ENCODE measurements at regions of chr12 and their contacts with region 1.

Region 1: GRCh38 chr12:56041552-56042429 is at the start of gene RPS26:
- DNase-seq: peak; percentile 95 to 96
- H3K4me3 ChIP-seq: peak within 1 kb of the TSS; percentile 73
- H3K27ac ChIP-seq: peak within 1 kb of the TSS; percentile 68
- H3K4me1 ChIP-seq: peaks cover 24% of the 10 kb centered on the region
- H3K27me3 ChIP-seq: no peaks in the 10 kb centered on the region
- CTCF ChIP-seq: peak; percentile 51
- total RNA-seq, gene RPS26: 25.2 and 43.3 TPM in 2 replicates

Region 2: DNA sequence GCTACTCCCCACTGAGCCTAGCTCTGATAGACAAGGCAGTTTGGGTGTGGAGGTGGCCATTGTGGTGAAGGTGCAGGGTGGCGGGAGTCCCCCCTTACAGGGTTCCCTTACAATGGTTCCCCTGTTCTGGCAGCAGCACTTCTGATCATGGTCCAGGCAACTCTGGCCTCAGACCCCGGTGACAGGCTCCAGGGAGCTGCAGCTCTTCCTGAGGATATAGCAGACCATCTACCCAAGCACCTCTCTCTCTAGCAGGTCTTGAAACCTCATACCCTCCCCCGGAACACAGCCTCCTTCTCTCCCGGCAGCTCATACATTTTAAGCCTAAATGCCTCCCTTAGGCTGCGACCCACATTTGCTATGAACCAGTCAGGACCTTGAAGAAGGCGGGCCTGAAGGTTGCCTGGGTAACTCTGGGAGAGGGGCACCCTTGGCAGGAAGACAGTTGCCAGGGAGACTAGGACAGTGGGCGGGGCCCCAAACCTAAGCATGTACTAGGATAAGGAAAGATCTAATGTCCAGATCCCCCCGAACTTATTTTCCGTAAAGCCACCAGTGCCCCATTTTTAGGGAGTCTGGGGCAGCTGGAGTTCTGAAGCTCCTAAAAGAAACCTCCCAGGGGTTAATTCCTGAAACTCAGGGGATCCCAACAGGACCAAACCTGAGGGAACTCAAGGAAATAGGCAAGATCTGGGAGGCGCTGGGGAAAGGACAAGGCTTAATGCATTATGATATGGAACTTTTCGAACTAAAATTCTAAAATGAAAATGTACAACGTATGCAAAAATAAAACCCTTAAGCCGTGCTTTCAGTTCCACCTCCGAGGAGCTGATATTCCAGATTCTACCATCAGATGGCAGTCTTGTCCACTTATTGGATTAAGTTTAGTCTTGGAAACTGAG is 303.4 kb before region 1 on chr12:
- CTCF ChIA-PET with region 1: no interaction called
- POLR2A ChIA-PET with region 1: no interaction called
- intact Hi-C with region 1: loop called (anchors 1 kb)
- DNase-seq: peak; percentile 68 to 71
- H3K4me3 ChIP-seq: peak overlapping the region; percentile 74
- H3K27ac ChIP-seq: no peak overlapping the region
- H3K4me1 ChIP-seq: peaks cover 12% of the 10 kb centered on the region
- H3K27me3 ChIP-seq: no peaks in the 10 kb centered on the region
- CTCF ChIP-seq: peak; percentile 90

Region 3: DNA sequence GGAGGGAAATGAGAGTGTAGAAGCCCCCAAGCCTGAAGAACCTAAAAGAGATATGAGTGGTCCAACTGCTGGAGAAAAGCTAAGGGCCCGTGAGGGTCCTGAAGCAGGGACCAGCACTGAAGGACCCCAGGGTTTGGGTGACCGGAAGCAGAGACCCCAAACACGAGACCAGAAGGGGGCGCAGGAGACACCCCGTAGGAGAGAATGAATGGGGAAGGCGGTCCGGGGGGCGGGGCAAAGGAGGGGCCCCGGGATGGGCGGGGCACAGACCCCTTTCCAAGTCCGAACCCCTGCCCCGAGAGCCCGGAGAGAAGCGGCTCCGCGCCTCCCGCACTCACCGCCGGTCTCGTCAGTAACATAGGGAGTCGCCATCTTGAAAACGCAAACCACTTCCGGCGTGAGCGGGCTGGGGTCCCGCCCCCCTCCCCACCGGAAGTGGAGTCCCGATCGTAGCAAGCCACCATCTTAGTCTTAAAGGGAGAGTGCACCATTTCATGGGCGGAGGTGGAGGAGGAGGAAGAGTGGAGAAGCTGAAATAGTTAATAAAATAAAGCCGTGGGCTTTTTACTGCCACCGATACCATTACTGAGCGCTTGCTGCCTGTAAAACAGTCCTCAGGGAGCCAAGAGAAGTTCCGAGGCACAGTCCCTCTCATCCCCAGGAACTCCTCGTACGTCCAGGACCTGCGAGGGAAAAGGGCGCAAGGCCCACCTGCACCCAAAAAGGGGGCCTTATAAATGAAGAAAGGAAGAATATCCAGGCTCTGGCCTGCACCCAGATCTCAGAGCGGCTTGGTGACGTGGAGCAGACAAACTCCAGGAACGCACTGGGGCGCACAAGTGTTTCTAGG is 114.8 kb before region 1 on chr12:
- CTCF ChIA-PET with region 1: interaction called, 3 read pairs
- POLR2A ChIA-PET with region 1: no interaction called
- intact Hi-C with region 1: loop called (anchors 2 kb)
- DNase-seq: peak; percentile 82 to 85
- H3K4me3 ChIP-seq: peak overlapping the region; percentile 100
- H3K27ac ChIP-seq: peak overlapping the region; percentile 83
- H3K4me1 ChIP-seq: peaks cover 39% of the 10 kb centered on the region
- H3K27me3 ChIP-seq: no peaks in the 10 kb centered on the region
- CTCF ChIP-seq: peak; percentile 86

Region 4: GRCh38 chr12:55996715-55997534 is 44.9 kb before region 1 on chr12 and contains the start of gene SUOX:
- CTCF ChIA-PET with region 1: interaction called, 4 read pairs
- POLR2A ChIA-PET with region 1: no interaction called
- intact Hi-C with region 1: loop called (anchors 1 kb)
- DNase-seq: peak; percentile 94 to 95
- H3K4me3 ChIP-seq: peak within 1 kb of the TSS; percentile 70
- H3K27ac ChIP-seq: no peak within 1 kb of the TSS
- H3K4me1 ChIP-seq: peaks cover 9% of the 10 kb centered on the region
- H3K27me3 ChIP-seq: no peaks in the 10 kb centered on the region
- CTCF ChIP-seq: no peak; the same call in 1 of the 2 replicates
- total RNA-seq, gene SUOX: 20.4 and 22.7 TPM in 2 replicates

Region 5: GRCh38 chr12:56078990-56079664 is 37.3 kb after region 1 on chr12:
- CTCF ChIA-PET with region 1: interaction called, 3 read pairs
- POLR2A ChIA-PET with region 1: no interaction called
- intact Hi-C with region 1: loop called (anchors 2 kb)
- DNase-seq: peak; percentile 74 to 91
- H3K4me3 ChIP-seq: peak overlapping the region; percentile 69
- H3K27ac ChIP-seq: peak overlapping the region; percentile 86
- H3K4me1 ChIP-seq: peaks cover 26% of the 10 kb centered on the region
- H3K27me3 ChIP-seq: no peaks in the 10 kb centered on the region
- CTCF ChIP-seq: peak; percentile 74

Region 6: GRCh38 chr12:56104109-56104814 is 62.5 kb after region 1 on chr12 and contains the start of gene PA2G4:
- CTCF ChIA-PET with region 1: no interaction called
- POLR2A ChIA-PET with region 1: no interaction called
- intact Hi-C with region 1: loop called (anchors 2 kb)
- DNase-seq: peak; percentile 97 to 98
- H3K4me3 ChIP-seq: peak within 1 kb of the TSS; percentile 97
- H3K27ac ChIP-seq: peak within 1 kb of the TSS; percentile 50
- H3K4me1 ChIP-seq: peaks cover 25% of the 10 kb centered on the region
- H3K27me3 ChIP-seq: no peaks in the 10 kb centered on the region
- CTCF ChIP-seq: no peak
- total RNA-seq, gene PA2G4: 120 and 159 TPM in 2 replicates

Region 7: GRCh38 chr12:56224102-56224701 is 182.4 kb after region 1 on chr12 and contains the start of gene NABP2:
- CTCF ChIA-PET with region 1: no interaction called
- POLR2A ChIA-PET with region 1: interaction called, 3 read pairs
- intact Hi-C with region 1: loop called (anchors 5 kb)
- DNase-seq: peak; percentile 92 to 98
- H3K4me3 ChIP-seq: peak within 1 kb of the TSS; percentile 91
- H3K27ac ChIP-seq: no peak within 1 kb of the TSS
- H3K4me1 ChIP-seq: peaks cover 27% of the 10 kb centered on the region
- H3K27me3 ChIP-seq: no peaks in the 10 kb centered on the region
- CTCF ChIP-seq: peak; percentile 81
- total RNA-seq, gene NABP2: 58.2 and 68.5 TPM in 2 replicates

Region 8: DNA sequence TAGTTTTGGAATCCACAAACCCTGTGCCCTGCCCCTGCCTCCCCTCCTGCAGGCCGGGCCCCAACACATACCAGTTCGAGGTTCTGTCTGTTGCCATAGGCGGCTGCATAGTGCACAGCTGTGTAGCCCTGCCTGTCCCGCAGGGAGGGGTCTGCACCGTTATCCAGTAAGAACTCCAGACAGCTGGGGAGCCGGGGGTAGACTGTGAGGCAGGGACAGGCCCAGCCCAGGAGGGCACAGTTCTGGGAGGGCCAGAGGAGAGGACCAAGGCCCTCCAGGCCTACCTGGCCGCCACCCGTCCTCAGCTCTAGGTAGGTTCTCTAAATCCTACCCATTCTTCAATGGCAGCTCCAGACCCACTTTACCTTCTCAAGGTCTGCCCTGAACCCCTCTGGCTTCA is 206.9 kb after region 1 on chr12:
- CTCF ChIA-PET with region 1: no interaction called
- POLR2A ChIA-PET with region 1: no interaction called
- intact Hi-C with region 1: no loop called
- DNase-seq: no peak
- H3K4me3 ChIP-seq: no peak overlapping the region
- H3K27ac ChIP-seq: no peak overlapping the region
- H3K4me1 ChIP-seq: no peaks in the 10 kb centered on the region
- H3K27me3 ChIP-seq: no peaks in the 10 kb centered on the region
- CTCF ChIP-seq: no peak